ENCODE measurements at regions of chr10 and their contacts with region 1.

Region 1: GRCh38 chr10:123008439-123009205 is at the starts of genes ACADSB and IKZF5:
- DNase-seq: peak; percentile 96
- H3K4me3 ChIP-seq: peak within 1 kb of the TSS; percentile 85 to 94 (median 88)
- H3K27ac ChIP-seq: peak within 1 kb of the TSS; percentile 75
- H3K4me1 ChIP-seq: peaks cover 17% of the 10 kb centered on the region
- H3K27me3 ChIP-seq: no peaks in the 10 kb centered on the region
- CTCF ChIP-seq: no peak
- total RNA-seq, gene ACADSB: 4.2 to 12.8 TPM
- total RNA-seq, gene IKZF5: 6.5 to 9.2 TPM

Region 2: DNA sequence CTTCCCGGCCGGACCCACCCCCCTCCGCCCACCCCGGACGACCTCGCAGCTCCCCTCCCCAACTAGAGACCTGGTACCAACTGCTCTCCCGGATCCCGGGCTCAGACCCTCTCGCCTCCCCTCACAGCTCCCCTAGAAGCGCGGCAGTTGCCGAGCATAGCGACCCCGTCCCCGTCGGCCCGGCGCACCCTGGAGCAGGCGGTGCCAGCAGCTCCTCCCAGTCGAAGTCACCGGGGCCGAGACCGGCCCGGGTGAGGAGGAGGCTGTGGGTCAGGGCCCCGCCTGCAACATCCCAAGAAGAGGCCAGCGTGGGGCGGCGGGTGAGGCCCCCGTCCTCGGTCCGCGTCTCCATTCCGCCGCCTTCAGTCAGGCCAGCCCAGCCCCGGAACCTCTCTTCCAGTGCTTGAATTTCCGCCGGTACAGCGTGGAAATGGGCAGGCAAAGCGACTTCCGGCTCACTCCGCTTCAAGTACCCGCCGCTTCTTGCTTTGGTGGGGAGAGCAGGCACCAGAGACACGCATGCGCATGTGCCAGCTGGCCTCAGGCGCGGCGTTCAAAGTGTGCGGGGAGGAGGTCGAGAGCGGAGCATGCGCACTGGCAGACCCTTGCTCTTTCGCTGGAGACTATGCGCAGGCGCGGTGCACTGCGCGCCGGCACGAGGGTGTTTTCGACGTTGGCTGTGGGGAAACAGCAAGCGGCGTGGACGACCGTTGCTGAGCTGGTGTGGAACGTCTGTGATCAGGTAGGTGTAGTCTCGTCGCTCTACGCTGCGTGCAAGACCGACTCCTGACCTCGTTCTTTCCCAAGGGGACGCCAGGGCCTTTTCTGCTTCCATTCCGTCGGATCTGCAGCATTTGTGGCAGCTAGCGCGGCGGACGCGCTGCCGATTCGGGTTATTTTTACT is 54.5 kb before region 1 on chr10 and contains the start of gene C10orf88:
- CTCF ChIA-PET with region 1: no interaction called
- dilution Hi-C with region 1: no loop called
- in situ Hi-C with region 1: no loop called
- intact Hi-C with region 1: loop called (anchors 2 kb)
- DNase-seq: peak; percentile 97
- H3K4me3 ChIP-seq: peak within 1 kb of the TSS; percentile 67 to 90 (median 75)
- H3K27ac ChIP-seq: peak within 1 kb of the TSS; percentile 30
- H3K4me1 ChIP-seq: peaks cover 21% of the 10 kb centered on the region
- H3K27me3 ChIP-seq: no peaks in the 10 kb centered on the region
- CTCF ChIP-seq: no peak
- total RNA-seq, gene C10orf88: 9.5 to 12.3 TPM